ENCODE measurements at regions of chr11 and their contacts with region 1.

Region 1: GRCh38 chr11:114280696-114281095 is 15.5 kb upstream of the NNMT start:
- ATAC-seq: peak; percentile 69 to 98 (median 91)
- H3K4me3 ChIP-seq: no peak overlapping the region
- H3K27ac ChIP-seq: no peak overlapping the region
- H3K4me1 ChIP-seq: peaks cover 0 to 4% of the 10 kb centered on the region in 2 donors

Region 2: DNA sequence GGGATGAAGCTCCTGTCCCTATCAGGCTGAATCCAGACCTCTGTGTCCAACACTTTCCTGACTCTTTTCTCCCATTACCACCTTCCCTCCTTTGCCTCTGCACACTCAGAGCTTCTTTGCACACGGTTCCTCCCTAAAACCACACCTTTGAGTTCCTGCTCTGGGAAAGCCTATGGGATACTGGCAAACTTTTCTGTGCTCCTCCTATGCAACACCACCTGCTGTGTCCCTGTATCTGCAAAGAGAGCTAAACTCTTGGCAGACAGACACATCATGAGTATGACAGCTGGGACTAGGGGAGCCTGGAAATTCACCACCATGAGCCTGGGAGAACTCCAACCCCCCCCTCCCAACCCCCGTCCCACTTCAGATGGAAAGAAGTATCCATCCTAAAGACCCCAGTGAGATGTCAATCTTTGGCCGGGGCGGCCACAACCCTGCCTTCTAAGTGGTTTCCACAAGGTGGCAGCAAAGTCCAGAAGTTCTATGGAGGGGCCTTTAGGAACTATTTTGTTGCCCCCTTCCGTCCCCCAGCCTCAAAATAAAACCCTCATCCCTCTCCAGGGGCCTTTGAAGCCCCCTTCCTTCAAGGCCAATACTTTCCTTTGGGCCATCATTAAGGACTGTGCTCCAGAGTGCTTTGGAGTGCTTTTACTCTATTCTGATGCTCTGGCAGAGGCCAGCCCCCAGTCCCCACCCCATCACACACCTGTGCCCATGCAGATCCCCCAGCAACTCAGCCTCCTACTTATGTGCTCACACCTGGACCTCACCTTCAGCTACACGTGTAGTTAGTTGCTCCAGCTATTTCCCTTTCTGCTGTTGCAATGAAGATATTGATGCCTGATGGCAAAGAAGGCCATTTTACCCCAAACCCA is 286.4 kb before region 1 on chr11:
- in situ Hi-C with region 1: loop called in 1 of 9 experiments (anchors 10 kb)
- ATAC-seq: peak in 6 of 8 experiments; percentile 29 to 42 (median 36)
- H3K4me3 ChIP-seq: no peak overlapping the region
- H3K27ac ChIP-seq: no peak overlapping the region
- H3K4me1 ChIP-seq: peaks cover 7 to 9% of the 10 kb centered on the region in 2 donors

Region 3: DNA sequence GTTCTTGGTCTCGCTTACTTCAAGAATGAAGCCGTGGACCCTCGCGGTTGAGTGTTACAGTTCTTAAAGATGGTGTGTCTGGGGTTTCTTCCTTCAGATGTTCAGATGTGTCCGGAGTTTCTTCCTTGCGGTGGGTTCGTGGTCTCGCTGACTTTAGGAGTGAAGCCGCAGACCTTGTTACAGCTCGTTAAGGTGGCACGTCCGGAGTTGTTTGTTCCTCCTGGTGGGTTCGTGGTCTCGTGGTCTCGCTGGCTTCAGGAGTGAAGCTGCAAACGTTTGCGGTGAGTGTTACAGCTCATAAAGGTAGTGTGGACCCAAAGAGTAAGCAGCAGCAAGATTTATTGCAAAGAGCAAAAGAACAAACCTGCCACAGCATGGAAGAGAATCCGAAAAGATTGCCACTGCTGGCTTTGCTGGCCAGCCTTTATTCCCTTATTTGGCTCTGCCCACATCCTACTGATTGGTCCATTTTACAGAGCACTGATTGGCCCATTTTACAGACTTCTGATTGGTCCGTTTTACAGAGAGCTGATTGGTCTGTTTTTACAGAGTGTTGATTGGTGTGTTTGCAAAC is 370.5 kb after region 1 on chr11:
- in situ Hi-C with region 1: no loop called
- ATAC-seq: no peak
- H3K4me3 ChIP-seq: no peak overlapping the region
- H3K27ac ChIP-seq: no peak overlapping the region
- H3K4me1 ChIP-seq: no peaks in the 10 kb centered on the region

Region 4: GRCh38 chr11:114762408-114762807 is 481.7 kb after region 1 on chr11:
- in situ Hi-C with region 1: loop called in 1 of 9 experiments (anchors 10 kb)
- ATAC-seq: peak; percentile 67 to 99 (median 84)
- H3K4me3 ChIP-seq: no peak overlapping the region
- H3K27ac ChIP-seq: no peak overlapping the region
- H3K4me1 ChIP-seq: peaks cover 0 to 7% of the 10 kb centered on the region in 2 donors